Heart left ventricle (tissue), 16 donors: ENCODE measurements at regions of chr3 and their contacts with region 1.

Region 1: GRCh38 chr3:123559040-123559861 is 25.6 kb downstream of the HACD2 start:
- DNase-seq: no peak
- ATAC-seq: peak in 2 of 4 donors; percentile 41
- H3K4me3 ChIP-seq: no peak overlapping the region
- H3K27ac ChIP-seq: no peak overlapping the region
- H3K4me1 ChIP-seq: peaks cover 0 to 5% (median 0%) of the 10 kb centered on the region in 12 donors
- H3K27me3 ChIP-seq: no peaks in the 10 kb centered on the region
- CTCF ChIP-seq: peak; percentile 78 to 95 (median 84)
- POLR2A ChIP-seq: no peak

Region 2: GRCh38 chr3:123503203-123503602 is 56.0 kb before region 1 on chr3:
- intact Hi-C with region 1: loop called in 1 of 10 experiments (anchors 5 kb)
- DNase-seq: no peak
- ATAC-seq: no peak
- H3K4me3 ChIP-seq: no peak overlapping the region
- H3K27ac ChIP-seq: no peak overlapping the region
- H3K4me1 ChIP-seq: no peaks in the 10 kb centered on the region
- H3K27me3 ChIP-seq: no peaks in the 10 kb centered on the region
- CTCF ChIP-seq: no peak
- POLR2A ChIP-seq: no peak

Region 3: GRCh38 chr3:123535580-123535979 is 23.7 kb before region 1 on chr3:
- intact Hi-C with region 1: no loop called
- DNase-seq: no peak
- ATAC-seq: no peak
- H3K4me3 ChIP-seq: no peak overlapping the region
- H3K27ac ChIP-seq: no peak overlapping the region
- H3K4me1 ChIP-seq: no peaks in the 10 kb centered on the region
- H3K27me3 ChIP-seq: no peaks in the 10 kb centered on the region
- CTCF ChIP-seq: no peak
- POLR2A ChIP-seq: no peak

Region 4: DNA sequence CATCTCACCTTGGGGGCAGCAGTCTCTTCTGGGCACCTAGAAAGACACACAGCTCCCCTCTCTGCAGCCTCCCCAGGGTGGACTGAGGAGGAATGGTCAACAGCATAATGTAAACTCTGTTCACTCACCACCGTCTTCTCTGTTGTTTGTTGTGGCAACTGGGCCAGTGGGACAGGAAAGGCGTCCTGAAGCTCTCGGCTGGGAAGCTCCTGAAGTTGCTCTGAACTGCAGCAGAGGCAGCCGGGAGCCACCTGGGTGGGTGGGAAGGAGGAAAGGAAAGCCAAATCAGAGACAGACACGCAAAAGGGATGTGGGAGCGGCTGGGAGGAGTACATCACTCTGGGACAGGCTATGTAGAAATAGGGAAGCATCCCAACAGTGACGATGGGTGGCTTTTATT is 272.2 kb after region 1 on chr3:
- intact Hi-C with region 1: no loop called
- DNase-seq: no peak
- ATAC-seq: no peak
- H3K4me3 ChIP-seq: no peak overlapping the region
- H3K27ac ChIP-seq: no peak overlapping the region
- H3K4me1 ChIP-seq: no peaks in the 10 kb centered on the region
- H3K27me3 ChIP-seq: no peaks in the 10 kb centered on the region
- CTCF ChIP-seq: no peak
- POLR2A ChIP-seq: no peak